ENCODE measurements at regions of chr9 and their contacts with region 1.

Region 1: GRCh38 chr9:99513441-99514112 is 291.5 kb downstream of the SEC61B start:
- DNase-seq: peak; percentile 40
- ATAC-seq: peak; percentile 37
- H3K4me3 ChIP-seq: no peak overlapping the region
- H3K4me3 Mint-ChIP-seq: peak overlapping the region; percentile 58
- H3K27ac ChIP-seq: peak overlapping the region; percentile 45 to 57
- H3K27ac Mint-ChIP-seq: peak overlapping the region; percentile 88
- H3K4me1 ChIP-seq: peaks cover 71% of the 10 kb centered on the region in 2 donors
- H3K4me1 Mint-ChIP-seq: peaks cover 77% of the 10 kb centered on the region
- H3K27me3 ChIP-seq: no peaks in the 10 kb centered on the region
- H3K27me3 Mint-ChIP-seq: no peaks in the 10 kb centered on the region
- CTCF ChIP-seq: no peak

Region 2: GRCh38 chr9:99595796-99596195 is 82.2 kb after region 1 on chr9:
- CTCF ChIA-PET with region 1: no interaction called
- POLR2A ChIA-PET with region 1: no interaction called
- intact Hi-C with region 1: loop called (anchors 5 kb)
- DNase-seq: peak; percentile 85
- ATAC-seq: peak; percentile 68
- H3K4me3 ChIP-seq: no peak overlapping the region
- H3K4me3 Mint-ChIP-seq: peak overlapping the region; percentile 53
- H3K27ac ChIP-seq: peak overlapping the region in 1 of 2 donors; percentile 38
- H3K27ac Mint-ChIP-seq: peak overlapping the region; percentile 84
- H3K4me1 ChIP-seq: peaks cover 29% of the 10 kb centered on the region in 2 donors
- H3K4me1 Mint-ChIP-seq: peaks cover 52% of the 10 kb centered on the region
- H3K27me3 ChIP-seq: no peaks in the 10 kb centered on the region
- H3K27me3 Mint-ChIP-seq: no peaks in the 10 kb centered on the region
- CTCF ChIP-seq: no peak

Region 3: GRCh38 chr9:99762470-99762869 is 248.9 kb after region 1 on chr9:
- CTCF ChIA-PET with region 1: no interaction called
- POLR2A ChIA-PET with region 1: interaction called, 3 read pairs
- intact Hi-C with region 1: loop called (anchors 10 kb)
- DNase-seq: peak; percentile 70
- ATAC-seq: peak; percentile 96
- H3K4me3 ChIP-seq: peak overlapping the region in 2 of 5 experiments; percentile 12 to 27
- H3K4me3 Mint-ChIP-seq: no peak overlapping the region
- H3K27ac ChIP-seq: peak overlapping the region; percentile 68 to 74
- H3K27ac Mint-ChIP-seq: no peak overlapping the region
- H3K4me1 ChIP-seq: peaks cover 13 to 18% of the 10 kb centered on the region in 2 donors
- H3K4me1 Mint-ChIP-seq: no peaks in the 10 kb centered on the region
- H3K27me3 ChIP-seq: no peaks in the 10 kb centered on the region
- H3K27me3 Mint-ChIP-seq: no peaks in the 10 kb centered on the region
- CTCF ChIP-seq: no peak

Measured in B cell (primary cell).